Activated CD4-positive, alpha-beta memory T cell treated with anti-CD3 and anti-CD28 coated beads for 36 hours (primary cell): ENCODE measurements at regions of chr4 and their contacts with region 1.

Region 1: DNA sequence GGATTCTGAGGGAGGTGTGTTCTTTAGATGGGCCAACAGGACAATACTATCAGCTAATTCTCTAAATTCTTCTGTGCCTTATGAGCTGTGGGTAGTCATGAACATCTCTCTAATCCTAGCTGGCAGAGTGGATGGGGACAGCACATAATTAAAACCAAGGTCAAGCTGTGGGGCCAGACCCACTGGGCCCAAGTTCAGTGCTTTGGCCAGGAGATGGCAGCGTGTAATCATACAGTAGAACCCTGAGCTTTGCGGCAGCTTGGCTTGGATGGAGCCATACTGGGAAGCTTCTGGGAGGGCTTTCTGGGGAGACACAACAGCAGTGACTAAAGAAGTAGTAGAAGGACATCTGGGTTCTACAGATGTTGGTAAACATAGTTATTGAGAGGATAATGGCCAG is 140.3 kb upstream of the CXCL13 start:
- DNase-seq: peak; percentile 53
- H3K4me3 Mint-ChIP-seq: no peak overlapping the region
- H3K27ac Mint-ChIP-seq: no peak overlapping the region
- H3K4me1 Mint-ChIP-seq: no peaks in the 10 kb centered on the region
- H3K27me3 Mint-ChIP-seq: peaks cover 14% of the 10 kb centered on the region

Region 2: DNA sequence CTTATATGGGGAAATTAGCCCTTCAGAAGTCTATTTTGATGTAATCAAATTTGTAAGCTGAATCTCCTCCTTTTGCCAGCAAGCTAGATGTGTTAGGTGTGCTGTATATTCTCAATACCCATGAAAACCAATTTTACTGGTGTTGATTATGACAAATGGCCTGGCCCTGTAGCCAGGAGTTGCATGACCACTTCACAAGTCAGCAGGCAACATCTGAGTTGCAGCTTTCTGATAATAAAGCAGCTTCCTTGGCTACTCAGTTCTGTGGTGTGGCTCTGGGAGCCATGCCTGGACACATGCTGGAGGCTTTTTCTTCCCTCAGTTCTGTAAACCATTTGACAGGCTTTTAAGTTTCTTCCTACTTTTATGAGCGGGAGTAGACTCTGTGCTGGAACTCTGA is 13.7 kb before region 1 on chr4:
- CTCF ChIA-PET with region 1: interaction called, 10 read pairs
- POLR2A ChIA-PET with region 1: interaction called, 3 read pairs
- intact Hi-C with region 1: no loop called
- DNase-seq: no peak
- H3K4me3 Mint-ChIP-seq: no peak overlapping the region
- H3K27ac Mint-ChIP-seq: no peak overlapping the region
- H3K4me1 Mint-ChIP-seq: no peaks in the 10 kb centered on the region
- H3K27me3 Mint-ChIP-seq: no peaks in the 10 kb centered on the region

Region 3: DNA sequence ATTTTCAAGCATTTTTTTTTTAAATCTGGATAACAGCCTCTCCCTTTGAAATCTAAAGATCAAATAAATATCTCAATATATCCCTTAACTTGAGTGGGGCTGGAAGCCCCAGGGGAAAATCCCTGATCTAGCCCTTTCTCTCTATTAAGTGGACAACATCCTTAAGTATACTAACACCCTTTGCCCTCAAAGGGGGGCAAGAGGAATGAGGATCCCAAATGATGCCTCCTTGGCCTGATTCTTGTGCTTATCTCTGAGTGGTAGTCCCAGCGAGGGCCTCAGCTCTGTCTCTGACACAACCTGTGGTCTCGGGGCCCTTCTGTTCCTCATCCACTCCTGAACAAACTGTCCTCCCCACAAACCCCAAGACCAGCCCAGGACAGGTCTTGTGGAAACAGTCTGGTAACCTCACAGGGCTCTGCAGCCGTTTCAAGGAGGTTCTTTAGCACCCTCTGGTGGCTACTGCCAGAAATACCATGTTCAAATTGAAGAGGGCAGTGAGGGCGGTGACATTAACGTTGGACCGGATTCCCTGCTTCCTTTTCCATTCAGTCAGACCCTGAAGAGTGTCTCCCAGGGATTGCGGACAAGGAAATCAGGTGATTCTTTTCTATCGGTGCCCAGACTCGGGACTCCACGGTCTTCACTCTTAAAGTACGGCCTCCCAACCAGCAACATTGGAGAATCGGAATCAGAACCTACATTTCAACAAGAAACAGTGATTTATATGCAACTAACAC is 153.3 kb after region 1 on chr4:
- CTCF ChIA-PET with region 1: interaction called, 92 read pairs
- POLR2A ChIA-PET with region 1: no interaction called
- intact Hi-C with region 1: loop called (anchors 1 kb)
- DNase-seq: peak; percentile 71
- H3K4me3 Mint-ChIP-seq: no peak overlapping the region
- H3K27ac Mint-ChIP-seq: no peak overlapping the region
- H3K4me1 Mint-ChIP-seq: peaks cover 5% of the 10 kb centered on the region
- H3K27me3 Mint-ChIP-seq: peaks cover 15% of the 10 kb centered on the region

Region 4: GRCh38 chr4:77697860-77698590 is 232.8 kb after region 1 on chr4:
- CTCF ChIA-PET with region 1: interaction called, 6 read pairs
- POLR2A ChIA-PET with region 1: no interaction called
- intact Hi-C with region 1: loop called (anchors 5 kb)
- DNase-seq: no peak
- H3K4me3 Mint-ChIP-seq: no peak overlapping the region
- H3K27ac Mint-ChIP-seq: no peak overlapping the region
- H3K4me1 Mint-ChIP-seq: peaks cover 4% of the 10 kb centered on the region
- H3K27me3 Mint-ChIP-seq: no peaks in the 10 kb centered on the region

Region 5: DNA sequence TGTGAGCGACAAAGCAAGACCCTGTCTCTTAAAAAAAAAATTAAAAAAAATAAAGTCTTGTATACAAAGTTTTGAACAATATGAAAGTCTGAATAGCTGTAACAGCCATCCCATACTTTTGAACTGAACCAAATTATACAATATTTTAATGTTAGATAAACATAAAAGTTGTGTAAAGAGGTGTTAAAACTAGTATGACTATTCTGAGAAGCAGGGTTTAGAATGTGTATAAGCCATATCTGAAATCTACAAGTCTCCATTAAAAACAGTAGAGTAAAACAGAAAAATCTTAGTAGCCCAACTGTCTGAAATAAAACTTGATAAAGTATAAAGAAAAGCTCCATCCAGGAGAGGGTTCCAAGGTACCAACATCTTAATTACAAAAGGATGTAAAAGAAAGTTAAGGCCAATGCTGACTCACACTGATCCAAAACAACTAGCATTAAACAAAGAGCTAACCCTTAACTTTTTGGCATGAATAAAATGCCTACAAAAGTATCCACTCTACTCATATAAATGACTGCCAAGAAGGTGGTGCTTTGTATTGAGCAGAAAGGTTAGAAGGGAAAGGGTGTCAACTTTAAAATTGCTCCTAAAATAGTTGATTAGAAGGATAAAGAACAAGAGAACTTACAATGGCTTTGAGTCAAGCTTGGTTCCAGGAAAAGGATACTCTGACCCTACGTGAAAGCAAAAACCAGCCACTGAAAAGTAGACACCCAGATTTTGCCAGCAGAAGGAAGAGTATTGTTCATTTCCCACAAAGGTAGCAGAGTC is 335.4 kb after region 1 on chr4:
- CTCF ChIA-PET with region 1: no interaction called
- POLR2A ChIA-PET with region 1: no interaction called
- intact Hi-C with region 1: no loop called
- DNase-seq: no peak
- H3K4me3 Mint-ChIP-seq: peak overlapping the region; percentile 42
- H3K27ac Mint-ChIP-seq: peak overlapping the region; percentile 85
- H3K4me1 Mint-ChIP-seq: peaks cover 70% of the 10 kb centered on the region
- H3K27me3 Mint-ChIP-seq: no peaks in the 10 kb centered on the region